Psoas muscle (tissue), 8 donors: ENCODE measurements at regions of chr1 and their contacts with region 1.

Region 1: GRCh38 chr1:201224666-201225370 is 34.2 kb downstream of the IGFN1 start:
- DNase-seq: no peak
- ATAC-seq: no peak
- H3K4me3 ChIP-seq: no peak overlapping the region
- H3K27ac ChIP-seq: no peak overlapping the region
- H3K4me1 ChIP-seq: peaks cover 7% of the 10 kb centered on the region
- H3K27me3 ChIP-seq: no peaks in the 10 kb centered on the region
- CTCF ChIP-seq: no peak

Region 2: DNA sequence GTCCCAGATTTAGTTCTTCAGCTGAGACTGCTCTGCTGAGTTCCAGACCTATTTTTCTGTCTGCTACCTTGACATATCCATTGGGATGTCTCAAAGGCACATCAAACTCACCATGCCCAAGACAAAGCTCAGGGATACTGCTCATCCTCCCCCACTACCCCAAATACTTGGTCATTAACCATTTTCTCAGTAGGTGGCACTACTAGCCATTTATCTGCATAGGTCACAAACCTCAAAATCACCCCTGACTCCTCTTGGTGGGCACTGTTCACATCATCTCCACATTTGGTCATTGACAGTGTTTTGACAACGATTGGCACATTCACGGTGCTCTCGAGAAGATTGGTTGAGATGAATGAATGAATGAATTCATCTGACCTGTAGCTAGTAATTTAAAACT is 144.7 kb before region 1 on chr1:
- intact Hi-C with region 1: no loop called
- DNase-seq: no peak
- ATAC-seq: no peak
- H3K4me3 ChIP-seq: no peak overlapping the region
- H3K27ac ChIP-seq: no peak overlapping the region
- H3K4me1 ChIP-seq: no peaks in the 10 kb centered on the region
- H3K27me3 ChIP-seq: no peaks in the 10 kb centered on the region
- CTCF ChIP-seq: no peak

Region 3: GRCh38 chr1:201149400-201149799 is 75.4 kb before region 1 on chr1:
- intact Hi-C with region 1: loop called (anchors 2 to 5 kb)
- DNase-seq: no peak
- ATAC-seq: peak in 2 of 4 donors; percentile 52 to 55
- H3K4me3 ChIP-seq: no peak overlapping the region
- H3K27ac ChIP-seq: no peak overlapping the region
- H3K4me1 ChIP-seq: peaks cover 25% of the 10 kb centered on the region
- H3K27me3 ChIP-seq: no peaks in the 10 kb centered on the region
- CTCF ChIP-seq: peak; percentile 43

Region 4: GRCh38 chr1:201309426-201309825 is 84.6 kb after region 1 on chr1:
- intact Hi-C with region 1: no loop called
- DNase-seq: peak; percentile 83 to 92
- ATAC-seq: peak; percentile 84 to 97 (median 95)
- H3K4me3 ChIP-seq: no peak overlapping the region
- H3K27ac ChIP-seq: peak overlapping the region; percentile 61
- H3K4me1 ChIP-seq: peaks cover 6% of the 10 kb centered on the region
- H3K27me3 ChIP-seq: peaks cover 0 to 9% (median 0%) of the 10 kb centered on the region in 3 donors
- CTCF ChIP-seq: no peak